IMR-90 (cell line): ENCODE measurements at regions of chr4 and their contacts with region 1.

Region 1: GRCh38 chr4:52712172-52712990 is 38.8 kb downstream of the ERVMER34-1 start:
- DNase-seq: peak; percentile 93
- ATAC-seq: peak; percentile 99
- H3K4me3 ChIP-seq: peak overlapping the region; percentile 68
- H3K27ac ChIP-seq: peak overlapping the region; percentile 74
- H3K4me1 ChIP-seq: no peaks in the 10 kb centered on the region
- H3K27me3 ChIP-seq: no peaks in the 10 kb centered on the region; the same call in 1 of the 2 replicates
- CTCF ChIP-seq: no peak
- POLR2A ChIP-seq: peak; percentile 89
- RAD21 ChIP-seq: no peak

Region 2: DNA sequence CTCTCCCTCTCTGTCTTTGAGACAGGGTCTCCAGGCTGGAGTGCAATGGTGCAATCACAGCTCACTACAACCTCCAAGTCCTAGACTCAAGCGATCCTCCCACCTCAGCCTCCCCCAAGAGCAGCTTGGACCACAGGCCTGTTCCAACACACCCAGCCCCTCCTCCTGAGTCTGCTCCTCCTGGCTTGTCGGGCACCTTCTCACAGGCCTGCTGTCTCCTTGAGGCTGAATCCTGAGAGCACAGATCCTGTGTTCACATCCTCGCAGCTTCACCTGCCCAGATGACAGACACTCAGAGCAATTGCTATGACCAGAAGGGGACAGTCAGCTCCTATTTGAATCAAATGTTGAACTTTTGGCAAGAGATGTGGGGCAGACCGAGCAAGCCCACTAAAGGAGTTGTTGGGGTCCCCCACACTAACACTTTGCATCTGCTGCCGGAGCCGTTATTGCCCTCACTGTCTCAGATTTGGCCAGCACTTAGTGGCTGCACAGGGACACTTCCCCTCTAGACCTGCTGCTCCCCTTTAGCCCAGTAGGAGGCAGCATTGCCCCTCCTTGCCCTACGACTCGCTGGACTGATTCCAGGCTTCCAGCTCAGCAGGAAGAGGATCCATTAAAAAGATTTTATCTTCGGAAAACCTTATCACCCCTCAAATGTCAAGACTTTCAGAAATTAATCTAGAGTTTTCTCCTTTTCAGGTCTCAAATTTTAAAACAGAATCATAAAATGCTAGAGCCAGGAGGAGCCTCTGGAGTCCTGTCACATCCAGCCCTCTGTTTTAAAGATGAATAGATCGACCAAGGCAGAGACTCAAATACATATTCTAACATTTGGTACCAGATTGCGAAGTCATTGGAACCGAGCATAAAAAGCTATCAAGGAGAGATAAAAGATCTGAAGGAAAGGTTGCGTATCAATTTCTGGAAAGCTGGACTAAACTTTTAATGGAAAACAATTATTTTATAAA is 167.0 kb before region 1 on chr4:
- CTCF ChIA-PET with region 1: interaction called, 9 read pairs
- POLR2A ChIA-PET with region 1: no interaction called
- dilution Hi-C with region 1: no loop called
- in situ Hi-C with region 1: loop called (anchors 10 kb)
- intact Hi-C with region 1: loop called (anchors 2 kb)
- DNase-seq: peak; percentile 65
- ATAC-seq: peak; percentile 95
- H3K4me3 ChIP-seq: no peak overlapping the region
- H3K27ac ChIP-seq: no peak overlapping the region
- H3K4me1 ChIP-seq: no peaks in the 10 kb centered on the region
- H3K27me3 ChIP-seq: no peaks in the 10 kb centered on the region
- CTCF ChIP-seq: peak; percentile 98
- POLR2A ChIP-seq: peak; percentile 53; the same call in 1 of the 2 replicates
- RAD21 ChIP-seq: peak; percentile 99

Region 3: DNA sequence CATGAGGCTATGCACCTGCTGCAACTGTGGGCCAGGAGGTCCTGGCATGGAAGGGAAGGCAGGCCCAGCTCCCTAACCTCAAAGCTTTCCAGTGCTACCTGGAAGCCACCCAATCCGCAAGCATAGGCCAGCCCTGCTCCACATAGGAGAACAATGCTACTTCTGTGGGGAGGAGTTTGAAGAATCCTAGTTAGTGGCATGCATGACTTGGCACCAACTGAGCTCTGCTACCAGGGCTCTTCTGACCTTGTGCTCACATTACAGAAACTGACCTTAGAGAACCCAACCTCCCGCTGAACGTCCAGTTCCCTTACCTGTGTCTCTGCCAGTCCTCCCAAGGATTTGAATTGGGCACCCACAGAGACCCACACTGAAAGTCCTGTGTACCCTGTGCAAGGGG is 112.1 kb before region 1 on chr4:
- CTCF ChIA-PET with region 1: no interaction called
- POLR2A ChIA-PET with region 1: no interaction called
- dilution Hi-C with region 1: no loop called
- in situ Hi-C with region 1: no loop called
- intact Hi-C with region 1: loop called (anchors 5 kb)
- DNase-seq: no peak
- ATAC-seq: no peak
- H3K4me3 ChIP-seq: no peak overlapping the region
- H3K27ac ChIP-seq: no peak overlapping the region
- H3K4me1 ChIP-seq: peaks cover 5% of the 10 kb centered on the region; the same call in 1 of the 2 replicates
- H3K27me3 ChIP-seq: no peaks in the 10 kb centered on the region
- CTCF ChIP-seq: no peak
- POLR2A ChIP-seq: no peak
- RAD21 ChIP-seq: no peak

Region 4: DNA sequence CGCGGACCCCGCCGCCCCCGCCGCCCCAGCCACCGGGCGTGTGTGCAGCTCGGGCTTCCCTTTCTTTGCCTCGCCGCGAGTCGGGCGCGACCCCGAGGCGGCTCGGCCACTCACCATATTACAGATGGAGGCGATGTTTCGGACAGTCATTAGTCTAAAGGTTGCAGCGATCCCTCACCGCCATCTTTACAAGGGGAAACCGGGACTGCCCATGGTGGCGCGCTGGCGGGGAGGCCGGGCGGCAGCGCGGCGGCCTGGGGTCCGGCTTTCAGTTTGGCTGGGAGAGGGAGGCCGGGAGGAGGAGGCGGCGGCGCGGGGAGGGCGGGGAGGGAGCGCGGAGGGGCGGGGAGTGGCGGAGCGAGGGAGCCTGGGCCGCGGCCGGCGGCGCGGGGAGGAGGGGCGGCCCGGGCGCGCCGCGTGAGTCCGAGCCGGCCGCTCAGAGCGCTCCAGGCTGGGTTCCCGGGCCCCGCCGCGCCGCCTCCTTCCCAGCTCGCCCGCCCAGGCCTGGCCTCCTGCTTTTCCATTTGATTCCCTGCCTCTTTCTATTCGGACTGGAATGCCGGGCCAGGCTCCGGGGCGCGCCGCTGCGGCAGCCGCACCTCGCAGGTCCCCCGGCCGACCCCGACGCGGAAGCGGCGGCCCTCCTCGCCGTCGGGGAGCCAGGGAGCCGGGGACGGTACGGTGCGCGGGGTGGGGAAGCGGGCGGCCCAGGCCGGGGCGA is 53.2 kb before region 1 on chr4 and contains the start of gene USP46:
- CTCF ChIA-PET with region 1: no interaction called
- POLR2A ChIA-PET with region 1: no interaction called
- dilution Hi-C with region 1: no loop called
- in situ Hi-C with region 1: loop called (anchors 5 kb)
- intact Hi-C with region 1: loop called (anchors 5 kb)
- DNase-seq: peak; percentile 69
- ATAC-seq: peak; percentile 92
- H3K4me3 ChIP-seq: peak within 1 kb of the TSS; percentile 99
- H3K27ac ChIP-seq: peak within 1 kb of the TSS; percentile 99
- H3K4me1 ChIP-seq: peaks cover 4% of the 10 kb centered on the region
- H3K27me3 ChIP-seq: no peaks in the 10 kb centered on the region
- CTCF ChIP-seq: no peak
- POLR2A ChIP-seq: no peak
- RAD21 ChIP-seq: no peak
- total RNA-seq, gene USP46: 15.4 and 20.3 TPM in 2 replicates

Region 5: DNA sequence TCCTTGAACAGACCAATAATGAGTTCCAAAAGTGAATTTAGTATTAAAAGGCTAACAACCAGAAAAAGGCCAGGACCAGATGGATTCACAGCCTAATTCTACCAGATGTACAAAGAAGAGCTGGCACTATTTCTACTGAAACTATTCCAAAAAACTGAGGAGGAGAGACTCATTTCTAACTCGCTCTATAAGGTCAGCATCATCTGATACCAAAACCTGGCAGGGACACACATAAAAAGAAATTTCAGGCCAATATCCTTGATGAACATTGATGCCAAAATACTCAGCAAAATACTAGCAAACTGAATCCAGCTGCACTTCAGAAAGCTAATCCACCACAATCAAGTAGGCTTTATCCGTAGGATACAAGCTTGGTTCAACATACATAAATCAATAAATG is 17.4 kb before region 1 on chr4:
- CTCF ChIA-PET with region 1: no interaction called
- POLR2A ChIA-PET with region 1: no interaction called
- dilution Hi-C with region 1: no loop called
- in situ Hi-C with region 1: no loop called
- intact Hi-C with region 1: no loop called
- DNase-seq: no peak
- ATAC-seq: no peak
- H3K4me3 ChIP-seq: no peak overlapping the region
- H3K27ac ChIP-seq: no peak overlapping the region
- H3K4me1 ChIP-seq: no peaks in the 10 kb centered on the region; the same call in 1 of the 2 replicates
- H3K27me3 ChIP-seq: no peaks in the 10 kb centered on the region
- CTCF ChIP-seq: no peak
- POLR2A ChIP-seq: no peak
- RAD21 ChIP-seq: no peak

Region 6: DNA sequence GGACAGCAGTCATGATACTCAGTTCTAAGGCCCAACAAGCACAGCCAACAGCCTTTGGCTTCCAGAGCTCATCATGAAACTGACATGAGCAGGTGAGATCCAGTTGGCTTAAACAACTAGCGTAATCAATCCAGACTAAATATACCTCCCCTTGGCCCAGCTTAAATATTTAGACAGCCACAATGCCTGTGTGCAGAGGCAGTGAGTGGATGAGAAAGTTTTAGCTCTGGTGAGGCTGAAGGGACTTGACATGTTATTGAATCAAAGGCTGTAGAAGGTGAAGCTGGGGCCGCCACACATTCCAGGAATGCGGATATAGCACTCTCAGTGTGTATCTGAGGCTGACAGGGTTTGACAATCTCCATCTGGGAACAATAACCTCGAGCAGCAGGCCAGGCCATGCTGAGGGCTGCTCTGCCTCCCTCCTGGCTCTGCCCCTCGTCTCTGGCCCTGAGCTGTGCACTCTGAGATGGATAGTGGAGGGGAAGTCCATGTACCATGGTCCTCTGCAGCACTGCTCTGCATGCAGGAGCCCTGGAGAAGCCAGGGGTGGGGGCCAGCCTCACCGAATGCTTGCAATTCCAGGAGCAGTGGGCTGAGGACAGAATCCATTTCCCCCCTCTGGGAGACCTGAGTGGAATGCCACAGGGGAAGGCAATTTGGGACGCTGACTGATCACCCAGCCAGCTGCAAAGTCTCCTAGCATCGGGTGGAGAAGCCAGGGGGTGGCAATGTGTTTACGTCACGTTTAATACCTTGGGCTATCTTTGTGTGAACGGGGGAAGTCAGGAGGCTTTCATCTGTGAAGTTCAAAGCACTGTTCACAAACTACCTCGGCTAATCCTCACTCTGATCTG is 112.5 kb after region 1 on chr4:
- CTCF ChIA-PET with region 1: no interaction called
- POLR2A ChIA-PET with region 1: interaction called, 3 read pairs
- dilution Hi-C with region 1: no loop called
- in situ Hi-C with region 1: no loop called
- intact Hi-C with region 1: loop called (anchors 5 kb)
- DNase-seq: peak; percentile 85
- ATAC-seq: peak; percentile 75
- H3K4me3 ChIP-seq: no peak overlapping the region
- H3K27ac ChIP-seq: peak overlapping the region; percentile 62
- H3K4me1 ChIP-seq: peaks cover 26% of the 10 kb centered on the region
- H3K27me3 ChIP-seq: no peaks in the 10 kb centered on the region
- CTCF ChIP-seq: no peak
- POLR2A ChIP-seq: no peak
- RAD21 ChIP-seq: no peak

Region 7: DNA sequence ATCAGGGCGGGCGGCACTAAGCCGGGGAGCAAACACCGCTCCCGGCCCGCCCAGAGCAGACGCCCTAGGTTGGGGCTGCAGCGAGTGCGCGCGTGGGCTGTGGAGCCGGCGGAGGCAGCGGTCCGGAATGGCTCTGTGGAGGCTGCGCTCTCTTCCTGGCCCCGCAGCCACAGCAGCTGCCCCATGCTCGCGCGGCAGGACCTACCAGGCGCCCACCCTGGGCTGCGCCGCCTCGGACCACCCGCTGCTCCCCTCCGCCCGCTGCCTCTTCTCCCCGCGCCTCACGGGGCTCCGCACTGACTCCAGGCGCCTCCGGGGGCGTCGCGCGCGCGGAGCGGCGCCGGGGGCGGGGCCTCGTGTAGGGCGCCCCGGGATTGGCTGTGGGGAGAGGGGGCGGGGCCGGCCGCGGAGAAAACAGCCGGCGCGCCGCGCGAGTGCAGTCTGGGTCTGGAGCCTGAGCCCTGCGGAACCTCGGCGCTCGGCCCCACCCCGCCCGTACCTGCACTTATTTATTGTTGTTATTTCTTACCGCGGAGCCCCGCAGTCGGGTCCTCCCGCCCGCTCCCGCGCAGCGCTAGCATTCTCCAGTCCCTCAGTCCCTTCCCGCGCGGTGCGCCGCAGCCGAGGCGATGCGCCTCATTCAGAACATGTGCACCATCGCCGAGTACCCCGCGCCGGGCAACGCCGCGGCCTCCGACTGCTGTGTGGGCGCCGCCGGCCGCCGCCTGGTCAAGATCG is 149.7 kb after region 1 on chr4 and contains the start of gene RASL11B:
- CTCF ChIA-PET with region 1: no interaction called
- POLR2A ChIA-PET with region 1: no interaction called
- dilution Hi-C with region 1: no loop called
- in situ Hi-C with region 1: no loop called
- intact Hi-C with region 1: loop called (anchors 2 kb)
- DNase-seq: peak; percentile 52
- ATAC-seq: peak; percentile 98
- H3K4me3 ChIP-seq: peak within 1 kb of the TSS; percentile 89
- H3K27ac ChIP-seq: peak within 1 kb of the TSS; percentile 55; the same call in 1 of the 2 replicates
- H3K4me1 ChIP-seq: peaks cover 9% of the 10 kb centered on the region
- H3K27me3 ChIP-seq: peaks cover 8% of the 10 kb centered on the region
- CTCF ChIP-seq: no peak; the same call in 1 of the 2 replicates
- POLR2A ChIP-seq: no peak; the same call in 1 of the 2 replicates
- RAD21 ChIP-seq: no peak
- total RNA-seq, gene RASL11B: 0.18 and 0.28 TPM in 2 replicates